ENCODE measurements at regions of chr2 and their contacts with region 1.

Region 1: DNA sequence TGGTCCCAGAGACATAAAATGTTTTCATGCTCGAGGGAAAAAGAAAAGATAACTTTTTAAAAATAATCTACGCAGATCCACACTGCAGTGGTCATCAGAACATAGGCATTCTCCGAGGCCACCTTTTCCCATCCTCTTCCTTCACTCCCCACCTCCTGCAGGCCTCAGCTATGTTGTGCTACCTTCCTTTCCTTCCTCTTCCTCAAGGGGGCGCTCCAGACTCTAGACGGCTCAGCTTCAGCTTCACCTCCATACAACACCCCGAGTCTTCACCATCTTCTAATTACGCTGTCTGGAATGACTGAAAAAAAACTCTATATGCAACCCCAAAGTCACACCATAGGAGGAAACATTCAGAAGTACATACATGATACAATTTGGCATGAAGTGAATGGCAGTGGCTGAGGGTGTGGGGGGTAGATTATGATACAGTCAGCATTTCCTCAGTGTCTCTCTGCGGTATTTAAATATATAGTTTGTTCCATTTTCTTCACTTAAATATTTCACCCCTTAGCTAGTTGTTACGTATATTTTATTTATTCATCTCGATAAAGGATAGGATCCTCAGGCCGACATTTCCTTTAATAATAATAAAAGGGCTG is 583.6 kb downstream of the IRS1 start:
- DNase-seq: peak; percentile 77
- ATAC-seq: peak; percentile 93
- H3K4me3 ChIP-seq: no peak overlapping the region
- H3K27ac ChIP-seq: peak overlapping the region; percentile 94
- H3K4me1 ChIP-seq: peaks cover 43 to 56% of the 10 kb centered on the region in 2 experiments
- H3K27me3 ChIP-seq: no peaks in the 10 kb centered on the region
- CTCF ChIP-seq: peak; percentile 48 to 93 (median 89); a peak in 5 of 6 replicates
- POLR2A ChIP-seq: no peak
- RAD21 ChIP-seq: peak; percentile 96

Region 2: DNA sequence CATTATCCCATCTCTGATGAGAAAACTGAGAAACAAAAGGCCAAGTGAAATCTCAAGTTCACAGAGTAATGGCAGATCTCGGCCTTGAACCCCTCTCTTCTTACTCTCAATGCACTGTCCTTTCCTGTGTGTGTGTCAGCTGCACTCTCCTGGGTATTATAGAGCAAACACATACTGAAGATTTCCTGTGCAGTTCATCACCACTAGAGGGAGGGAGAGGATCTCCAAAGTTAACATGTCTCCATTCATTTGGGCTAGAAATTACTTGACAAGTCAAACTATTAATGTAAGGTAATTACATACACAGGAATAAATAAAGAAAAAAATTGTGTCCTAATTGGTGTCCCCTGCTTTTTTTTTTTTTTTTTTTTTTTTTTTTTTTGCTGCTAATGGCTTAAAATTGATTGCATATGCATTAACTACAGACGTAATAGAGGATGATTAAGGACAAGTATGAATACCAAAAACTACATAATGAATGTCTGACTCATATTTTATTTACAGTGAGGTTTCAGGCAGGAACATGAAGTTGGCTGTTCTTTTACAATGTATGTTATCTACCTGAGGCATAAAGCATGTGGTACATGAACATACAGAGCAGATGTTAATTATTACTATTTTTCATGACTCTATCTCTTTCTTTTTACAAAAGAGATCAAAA is 547.3 kb before region 1 on chr2:
- CTCF ChIA-PET with region 1: no interaction called
- POLR2A ChIA-PET with region 1: no interaction called
- RAD21 ChIA-PET with region 1: no interaction called
- intact Hi-C with region 1: loop called (anchors 2 kb)
- DNase-seq: peak; percentile 72
- ATAC-seq: peak; percentile 79
- H3K4me3 ChIP-seq: no peak overlapping the region
- H3K27ac ChIP-seq: peak overlapping the region; percentile 67; the same call in 1 of the 2 replicates
- H3K4me1 ChIP-seq: peaks cover 21 to 32% of the 10 kb centered on the region in 2 experiments
- H3K27me3 ChIP-seq: no peaks in the 10 kb centered on the region
- CTCF ChIP-seq: peak; percentile 74 to 91 (median 80)
- POLR2A ChIP-seq: no peak
- RAD21 ChIP-seq: peak; percentile 86

Region 3: DNA sequence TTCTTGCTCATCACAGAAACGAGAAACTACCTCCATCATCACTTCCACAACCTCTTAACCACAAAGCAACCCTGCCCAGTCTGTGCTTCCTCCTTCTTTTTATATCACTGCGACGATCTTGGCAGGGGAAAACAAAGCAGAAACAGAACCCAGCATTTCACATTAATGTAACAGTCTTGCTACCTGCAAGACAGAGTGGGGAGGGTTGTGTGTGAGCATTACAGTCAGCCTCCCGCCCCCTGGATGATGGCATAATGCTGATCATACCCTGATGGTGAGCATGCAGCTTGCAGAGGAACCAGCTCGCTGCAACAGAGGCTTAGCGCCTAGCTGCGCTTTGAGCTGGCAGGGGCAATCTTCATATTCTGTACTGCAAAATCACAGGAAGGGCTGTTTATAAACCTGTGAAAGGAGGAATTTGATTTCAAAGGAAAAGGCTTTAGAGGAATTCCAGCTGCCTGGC is 207.5 kb after region 1 on chr2:
- CTCF ChIA-PET with region 1: no interaction called
- POLR2A ChIA-PET with region 1: no interaction called
- RAD21 ChIA-PET with region 1: no interaction called
- intact Hi-C with region 1: loop called (anchors 5 kb)
- DNase-seq: no peak
- ATAC-seq: peak; percentile 57
- H3K4me3 ChIP-seq: peak overlapping the region in 1 of 2 experiments; percentile 35; a peak in 2 of 4 replicates
- H3K27ac ChIP-seq: peak overlapping the region; percentile 86
- H3K4me1 ChIP-seq: peaks cover 61% of the 10 kb centered on the region in 2 experiments
- H3K27me3 ChIP-seq: no peaks in the 10 kb centered on the region
- CTCF ChIP-seq: no peak
- POLR2A ChIP-seq: no peak
- RAD21 ChIP-seq: no peak; the same call in 1 of the 2 replicates

Region 4: DNA sequence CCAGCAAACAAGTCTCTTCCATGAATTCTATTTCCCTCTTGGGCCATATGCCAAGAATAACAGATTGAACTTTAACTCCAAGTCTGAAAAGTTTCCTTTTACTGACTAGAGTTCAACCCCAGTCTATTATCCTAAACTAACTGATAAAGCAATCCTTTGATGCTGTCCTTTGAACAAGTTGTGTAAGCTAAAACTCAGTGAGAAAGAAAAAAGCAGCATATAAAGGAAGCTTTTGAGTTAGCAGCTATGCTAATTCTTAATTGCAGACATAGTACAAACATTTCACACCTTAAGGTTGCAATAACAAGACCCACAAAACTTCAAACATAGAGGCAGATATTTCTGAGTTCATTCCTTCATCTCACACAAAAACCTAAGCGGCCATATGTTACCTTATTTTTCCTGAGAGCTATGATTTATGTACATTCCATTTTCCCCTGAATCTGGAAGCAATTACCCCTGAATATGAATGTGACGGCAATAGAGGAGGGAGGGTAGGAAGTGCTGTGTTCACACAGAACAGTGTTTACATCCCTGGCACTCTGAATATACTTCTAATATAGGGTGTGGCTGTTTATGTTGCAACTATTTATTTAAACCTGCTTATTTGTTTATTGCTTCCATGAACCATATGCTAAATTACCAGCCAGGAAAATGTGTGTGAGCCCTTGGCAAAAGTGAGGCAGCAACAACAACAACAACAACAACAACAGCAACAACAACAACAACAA is 403.0 kb after region 1 on chr2:
- CTCF ChIA-PET with region 1: no interaction called
- POLR2A ChIA-PET with region 1: no interaction called
- RAD21 ChIA-PET with region 1: no interaction called
- intact Hi-C with region 1: loop called (anchors 10 kb)
- DNase-seq: peak; percentile 27
- ATAC-seq: peak; percentile 63
- H3K4me3 ChIP-seq: no peak overlapping the region
- H3K27ac ChIP-seq: peak overlapping the region; percentile 73
- H3K4me1 ChIP-seq: peaks cover 38 to 65% of the 10 kb centered on the region in 2 experiments
- H3K27me3 ChIP-seq: no peaks in the 10 kb centered on the region
- CTCF ChIP-seq: no peak
- POLR2A ChIP-seq: no peak
- RAD21 ChIP-seq: peak; percentile 6; the same call in 1 of the 2 replicates

Region 5: DNA sequence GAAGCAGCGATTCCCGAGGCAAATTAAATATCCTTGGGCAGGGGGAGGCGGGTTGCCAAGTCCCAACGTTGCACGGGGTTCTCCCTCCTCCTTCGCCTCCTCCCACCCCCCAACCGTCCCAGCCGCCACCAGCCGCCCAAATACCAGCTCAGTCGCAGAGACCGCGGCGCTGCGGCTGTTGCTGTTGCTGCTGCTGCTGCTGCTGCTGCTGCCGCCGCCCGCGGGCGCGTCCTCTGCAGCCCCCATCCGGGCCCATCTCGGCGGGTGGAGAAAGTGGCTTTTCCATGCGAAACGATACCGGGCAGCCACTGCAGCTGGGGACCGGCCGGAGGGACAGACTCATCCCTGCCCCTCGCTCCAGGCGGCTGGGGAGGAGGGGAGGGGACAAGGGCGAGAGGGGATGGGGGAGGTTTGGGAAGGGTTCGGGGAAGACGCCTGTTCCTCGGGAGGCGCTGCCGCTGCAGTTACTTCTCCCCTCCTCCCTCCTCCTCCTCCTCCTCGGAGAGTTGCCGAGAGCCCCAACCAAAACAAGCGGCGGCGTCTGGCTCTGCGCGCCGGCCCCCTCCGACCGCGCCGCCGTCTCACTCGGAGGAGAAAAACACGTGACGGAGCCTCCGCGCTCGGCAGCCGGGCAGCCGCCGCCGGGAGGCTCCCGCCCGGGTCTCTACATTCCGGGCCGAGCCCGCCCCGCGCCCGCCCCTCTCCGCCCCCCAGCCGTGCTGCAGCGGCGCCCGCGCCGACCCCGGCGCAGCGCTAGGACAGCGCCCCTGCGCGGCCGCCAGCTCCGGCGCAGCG is 583.4 kb after region 1 on chr2 and contains the start of gene IRS1:
- CTCF ChIA-PET with region 1: interaction called, 12 read pairs
- POLR2A ChIA-PET with region 1: no interaction called
- RAD21 ChIA-PET with region 1: interaction called in 1 of 2 experiments, 3 read pairs
- intact Hi-C with region 1: loop called (anchors 5 kb)
- DNase-seq: peak; percentile 32
- ATAC-seq: peak; percentile 71
- H3K4me3 ChIP-seq: peak within 1 kb of the TSS; percentile 55 to 71
- H3K27ac ChIP-seq: peak within 1 kb of the TSS; percentile 88
- H3K4me1 ChIP-seq: peaks cover 31 to 89% of the 10 kb centered on the region in 2 experiments; a peak in 3 of 4 replicates
- H3K27me3 ChIP-seq: no peaks in the 10 kb centered on the region
- CTCF ChIP-seq: peak in 1 of 3 experiments; percentile 26; a peak in 3 of 6 replicates
- POLR2A ChIP-seq: no peak
- RAD21 ChIP-seq: no peak
- total RNA-seq, gene IRS1: 88.8 TPM

Region 6: GRCh38 chr2:226984750-226985582 is 769.0 kb after region 1 on chr2:
- CTCF ChIA-PET with region 1: no interaction called
- POLR2A ChIA-PET with region 1: no interaction called
- RAD21 ChIA-PET with region 1: no interaction called
- intact Hi-C with region 1: loop called (anchors 10 kb)
- DNase-seq: peak; percentile 56
- ATAC-seq: peak; percentile 65
- H3K4me3 ChIP-seq: no peak overlapping the region
- H3K27ac ChIP-seq: peak overlapping the region; percentile 57
- H3K4me1 ChIP-seq: peaks cover 47 to 50% of the 10 kb centered on the region in 2 experiments
- H3K27me3 ChIP-seq: no peaks in the 10 kb centered on the region
- CTCF ChIP-seq: peak; percentile 56 to 83 (median 68); a peak in 5 of 6 replicates
- POLR2A ChIP-seq: no peak
- RAD21 ChIP-seq: peak; percentile 95